Posterior vena cava (tissue), 2 donors: ENCODE measurements at regions of chr2 and their contacts with region 1.

Region 1: DNA sequence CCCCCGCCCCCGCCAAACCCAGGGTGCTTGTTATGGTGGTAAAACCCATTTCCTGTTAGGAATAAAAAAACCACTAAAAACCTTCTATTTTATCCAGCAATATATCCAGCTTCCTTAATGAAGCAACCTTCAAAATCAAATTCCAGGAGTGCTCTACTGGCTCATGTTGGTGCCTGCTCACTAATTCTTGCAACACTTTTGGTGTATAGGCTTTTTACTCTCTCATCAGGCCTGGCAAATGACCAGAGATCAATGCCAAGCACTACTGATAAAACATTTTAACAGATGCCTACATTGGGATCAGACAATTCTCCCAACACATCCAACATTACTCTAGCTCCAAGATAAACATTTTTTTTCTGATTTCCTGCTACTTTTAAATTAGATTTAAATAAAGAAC is 312.4 kb downstream of the KCNJ3 start:
- DNase-seq: no peak

Region 2: GRCh38 chr2:154992826-154993225 is 18.1 kb before region 1 on chr2:
- intact Hi-C with region 1: loop called in 1 of 2 experiments (anchors 1 kb)
- DNase-seq: no peak